MCF 10A (cell line): ENCODE measurements at regions of chr18 and their contacts with region 1.

Region 1: GRCh38 chr18:49041435-49042245 is 90.9 kb upstream of the SMAD7 start:
- DNase-seq: peak; percentile 54
- H3K4me3 Mint-ChIP-seq: no peak overlapping the region
- H3K27ac Mint-ChIP-seq: no peak overlapping the region
- H3K4me1 Mint-ChIP-seq: no peaks in the 10 kb centered on the region
- H3K27me3 Mint-ChIP-seq: no peaks in the 10 kb centered on the region
- CTCF ChIP-seq: peak; percentile 52

Region 2: DNA sequence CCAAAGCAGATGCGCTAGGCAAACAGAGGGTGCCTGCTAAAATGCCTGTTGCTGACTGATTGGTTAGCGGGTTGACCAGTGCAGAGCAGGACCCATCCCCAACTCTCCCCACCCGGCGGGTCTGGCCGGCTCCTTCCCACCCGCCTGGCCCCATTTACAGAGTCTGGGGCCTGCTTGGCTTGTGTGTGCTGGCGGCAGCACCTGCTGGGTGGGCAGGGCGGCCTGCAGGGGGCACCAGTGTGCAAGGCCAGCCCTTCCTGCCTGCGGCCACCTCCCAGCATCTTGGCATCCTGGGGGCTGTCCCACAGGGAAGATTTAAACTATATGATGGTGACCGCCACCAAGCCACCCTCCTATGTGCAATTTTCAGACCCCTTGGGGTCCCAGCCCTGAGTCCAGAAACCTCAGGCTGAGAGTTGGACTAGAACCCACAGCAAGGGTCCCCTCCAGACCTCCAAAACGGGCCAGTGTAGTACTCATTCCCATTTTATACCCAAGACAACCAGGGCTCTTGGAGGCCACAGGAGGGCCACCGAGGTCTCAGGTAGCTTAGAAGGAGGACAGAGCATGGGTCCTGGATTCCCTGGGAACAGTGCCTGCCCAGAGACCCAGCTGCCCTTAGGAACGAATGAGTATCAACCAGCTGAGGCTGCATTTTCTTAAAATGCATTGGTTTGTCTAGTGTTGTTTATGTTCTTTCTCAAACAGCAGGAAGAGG is 264.5 kb before region 1 on chr18:
- CTCF ChIA-PET with region 1: interaction called, 15 read pairs
- POLR2A ChIA-PET with region 1: no interaction called
- intact Hi-C with region 1: loop called (anchors 1 kb)
- DNase-seq: peak; percentile 59
- H3K4me3 Mint-ChIP-seq: no peak overlapping the region
- H3K27ac Mint-ChIP-seq: no peak overlapping the region
- H3K4me1 Mint-ChIP-seq: peaks cover 4% of the 10 kb centered on the region
- H3K27me3 Mint-ChIP-seq: no peaks in the 10 kb centered on the region
- CTCF ChIP-seq: peak; percentile 84

Region 3: DNA sequence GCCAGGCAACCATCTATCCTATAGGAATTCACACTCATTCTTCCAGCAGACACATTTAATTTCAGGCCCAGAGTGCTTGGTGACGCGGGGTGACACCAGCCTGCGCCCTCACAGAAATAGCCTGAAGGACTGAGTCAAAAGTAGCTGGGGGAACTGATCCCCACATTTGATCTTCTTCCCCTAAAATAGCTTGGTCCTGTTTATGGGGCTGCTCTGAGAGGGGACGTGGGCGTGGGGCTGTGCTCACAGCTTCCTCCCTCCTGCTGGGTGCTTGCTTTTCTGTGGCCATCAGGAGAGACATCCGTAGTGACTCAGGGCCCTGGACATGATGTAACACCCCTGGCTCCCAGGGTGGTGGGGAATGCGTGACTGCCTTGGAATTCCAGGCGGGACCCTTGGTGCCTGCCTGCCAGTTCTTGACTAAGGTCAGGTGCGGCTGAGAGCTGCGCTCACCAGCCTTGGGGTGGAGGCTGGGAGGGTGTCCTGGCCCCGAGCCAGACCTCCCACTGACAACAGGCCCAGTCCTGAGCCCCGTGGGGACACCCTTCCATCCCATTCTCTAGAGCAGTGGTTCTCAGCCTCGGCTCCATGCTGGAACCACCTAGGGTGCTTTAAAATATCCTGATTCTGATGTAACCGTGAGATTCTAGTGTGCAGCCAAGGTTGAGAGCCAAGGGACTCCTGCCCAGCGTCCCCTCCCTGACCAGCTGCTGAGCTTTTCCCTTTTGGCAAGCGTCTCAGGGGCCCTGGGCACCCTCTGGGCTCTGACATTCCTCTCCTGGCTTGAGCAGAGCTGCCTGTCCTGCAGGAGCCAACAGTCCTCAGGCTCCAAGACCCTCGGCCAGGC is 43.4 kb before region 1 on chr18:
- CTCF ChIA-PET with region 1: interaction called, 4 read pairs
- POLR2A ChIA-PET with region 1: no interaction called
- intact Hi-C with region 1: loop called (anchors 2 kb)
- DNase-seq: peak; percentile 97
- H3K4me3 Mint-ChIP-seq: peak overlapping the region; percentile 13
- H3K27ac Mint-ChIP-seq: peak overlapping the region; percentile 83
- H3K4me1 Mint-ChIP-seq: peaks cover 31% of the 10 kb centered on the region
- H3K27me3 Mint-ChIP-seq: no peaks in the 10 kb centered on the region
- CTCF ChIP-seq: no peak

Region 4: GRCh38 chr18:49021433-49022129 is 20.1 kb before region 1 on chr18:
- CTCF ChIA-PET with region 1: interaction called, 22 read pairs
- POLR2A ChIA-PET with region 1: no interaction called
- intact Hi-C with region 1: no loop called
- DNase-seq: peak; percentile 93
- H3K4me3 Mint-ChIP-seq: peak overlapping the region; percentile 40
- H3K27ac Mint-ChIP-seq: peak overlapping the region; percentile 73
- H3K4me1 Mint-ChIP-seq: peaks cover 19% of the 10 kb centered on the region
- H3K27me3 Mint-ChIP-seq: no peaks in the 10 kb centered on the region
- CTCF ChIP-seq: peak; percentile 23

Region 5: GRCh38 chr18:49055754-49056172 is 14.1 kb after region 1 on chr18:
- CTCF ChIA-PET with region 1: interaction called, 15 read pairs
- POLR2A ChIA-PET with region 1: no interaction called
- intact Hi-C with region 1: no loop called
- DNase-seq: peak; percentile 75
- H3K4me3 Mint-ChIP-seq: peak overlapping the region; percentile 23
- H3K27ac Mint-ChIP-seq: peak overlapping the region; percentile 10
- H3K4me1 Mint-ChIP-seq: peaks cover 5% of the 10 kb centered on the region
- H3K27me3 Mint-ChIP-seq: no peaks in the 10 kb centered on the region
- CTCF ChIP-seq: no peak

Region 6: DNA sequence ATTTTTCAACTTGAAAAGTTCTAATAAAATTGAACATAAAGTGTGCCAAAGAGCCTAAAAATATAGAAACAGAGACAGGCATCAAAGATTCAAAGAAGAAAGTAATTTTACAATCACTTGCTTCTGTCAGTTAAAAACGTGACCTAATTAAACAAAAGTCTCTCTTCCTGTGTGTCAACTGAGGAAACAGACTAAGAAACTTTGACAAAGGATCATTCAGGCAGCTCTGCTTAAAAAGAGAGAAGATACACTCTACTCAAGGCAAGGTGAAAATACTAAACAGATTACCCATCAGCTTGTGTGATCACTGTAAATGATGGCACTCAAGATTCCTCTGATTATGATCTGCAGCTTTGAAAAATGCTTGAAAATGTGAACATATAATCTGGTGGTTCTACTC is 371.0 kb after region 1 on chr18:
- CTCF ChIA-PET with region 1: no interaction called
- POLR2A ChIA-PET with region 1: no interaction called
- intact Hi-C with region 1: loop called (anchors 1 kb)
- DNase-seq: no peak
- H3K4me3 Mint-ChIP-seq: no peak overlapping the region
- H3K27ac Mint-ChIP-seq: no peak overlapping the region
- H3K4me1 Mint-ChIP-seq: no peaks in the 10 kb centered on the region
- H3K27me3 Mint-ChIP-seq: no peaks in the 10 kb centered on the region
- CTCF ChIP-seq: no peak